ENCODE measurements at regions of chr1 and their contacts with region 1.

Region 1: GRCh38 chr1:186212544-186213226 is 162.4 kb downstream of the TPR start:
- DNase-seq: no peak
- ATAC-seq: no peak
- H3K4me3 Mint-ChIP-seq: no peak overlapping the region
- H3K27ac Mint-ChIP-seq: no peak overlapping the region
- H3K4me1 Mint-ChIP-seq: no peaks in the 10 kb centered on the region
- H3K27me3 Mint-ChIP-seq: no peaks in the 10 kb centered on the region
- CTCF ChIP-seq: no peak

Region 2: GRCh38 chr1:185720633-185721272 is 491.9 kb before region 1 on chr1:
- CTCF ChIA-PET with region 1: no interaction called
- POLR2A ChIA-PET with region 1: no interaction called
- intact Hi-C with region 1: loop called (anchors 1 kb)
- DNase-seq: no peak
- ATAC-seq: no peak
- H3K4me3 Mint-ChIP-seq: no peak overlapping the region
- H3K27ac Mint-ChIP-seq: no peak overlapping the region
- H3K4me1 Mint-ChIP-seq: no peaks in the 10 kb centered on the region
- H3K27me3 Mint-ChIP-seq: peaks cover 8% of the 10 kb centered on the region
- CTCF ChIP-seq: no peak

Region 3: DNA sequence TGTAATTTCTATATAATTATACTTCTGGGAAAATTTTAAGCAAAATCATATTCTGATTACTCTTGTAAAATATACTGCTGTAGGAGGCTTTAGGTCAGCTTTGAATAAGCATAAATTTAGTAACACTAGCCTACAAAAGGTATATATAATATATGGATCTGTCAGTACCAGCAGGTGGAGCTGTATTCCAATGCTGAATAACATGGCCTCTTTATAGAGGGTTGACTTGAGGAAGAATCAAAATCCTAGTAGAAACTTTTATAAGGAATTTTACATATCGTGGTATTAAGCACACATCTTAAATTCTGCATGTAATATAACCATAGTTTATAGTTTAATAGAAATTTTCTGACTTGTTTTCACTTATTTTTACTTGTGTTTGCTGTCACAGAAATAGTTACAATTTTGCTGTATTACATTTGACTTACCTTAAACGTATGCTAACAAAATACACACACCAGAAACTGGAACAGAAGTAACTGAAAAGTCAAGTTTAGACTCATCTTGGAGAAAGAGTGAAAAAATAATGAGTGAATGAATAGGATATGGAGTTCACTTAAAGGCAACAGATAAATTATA is 399.2 kb before region 1 on chr1:
- CTCF ChIA-PET with region 1: no interaction called
- POLR2A ChIA-PET with region 1: no interaction called
- intact Hi-C with region 1: loop called (anchors 1 kb)
- DNase-seq: no peak
- ATAC-seq: no peak
- H3K4me3 Mint-ChIP-seq: no peak overlapping the region
- H3K27ac Mint-ChIP-seq: no peak overlapping the region
- H3K4me1 Mint-ChIP-seq: no peaks in the 10 kb centered on the region
- H3K27me3 Mint-ChIP-seq: no peaks in the 10 kb centered on the region
- CTCF ChIP-seq: no peak

Region 4: GRCh38 chr1:188188317-188188716 is 1975.6 kb after region 1 on chr1:
- CTCF ChIA-PET with region 1: no interaction called
- POLR2A ChIA-PET with region 1: no interaction called
- intact Hi-C with region 1: no loop called
- DNase-seq: no peak
- ATAC-seq: no peak
- H3K4me3 Mint-ChIP-seq: no peak overlapping the region
- H3K27ac Mint-ChIP-seq: no peak overlapping the region
- H3K4me1 Mint-ChIP-seq: no peaks in the 10 kb centered on the region
- H3K27me3 Mint-ChIP-seq: no peaks in the 10 kb centered on the region
- CTCF ChIP-seq: no peak